Heart right ventricle (tissue), 16 donors: ENCODE measurements at regions of chr10 and their contacts with region 1.

Region 1: GRCh38 chr10:20995123-20995987 is 98.2 kb upstream of the NEBL start:
- DNase-seq: no peak
- ATAC-seq: peak in 4 of 8 donors; percentile 15 to 55 (median 46)
- H3K4me3 ChIP-seq: peak overlapping the region in 8 of 10 donors; percentile 16 to 37 (median 26)
- H3K27ac ChIP-seq: peak overlapping the region in 1 of 10 donors; percentile 16
- H3K4me1 ChIP-seq: peaks cover 0 to 9% (median 0%) of the 10 kb centered on the region in 9 donors
- H3K27me3 ChIP-seq: no peaks in the 10 kb centered on the region
- CTCF ChIP-seq: no peak

Region 2: GRCh38 chr10:20962165-20962564 is 33.2 kb before region 1 on chr10:
- intact Hi-C with region 1: loop called in 1 of 10 experiments (anchors 5 kb)
- DNase-seq: no peak
- ATAC-seq: no peak
- H3K4me3 ChIP-seq: no peak overlapping the region
- H3K27ac ChIP-seq: no peak overlapping the region
- H3K4me1 ChIP-seq: peaks cover 0 to 7% (median 0%) of the 10 kb centered on the region in 9 donors
- H3K27me3 ChIP-seq: no peaks in the 10 kb centered on the region
- CTCF ChIP-seq: no peak

Region 3: GRCh38 chr10:21069929-21070700 is 74.8 kb after region 1 on chr10:
- intact Hi-C with region 1: no loop called
- DNase-seq: no peak
- ATAC-seq: peak in 6 of 8 donors; percentile 53 to 79 (median 66)
- H3K4me3 ChIP-seq: no peak overlapping the region
- H3K27ac ChIP-seq: peak overlapping the region in 8 of 10 donors; percentile 25 to 66 (median 44)
- H3K4me1 ChIP-seq: peaks cover 0 to 41% (median 12%) of the 10 kb centered on the region in 9 donors
- H3K27me3 ChIP-seq: no peaks in the 10 kb centered on the region
- CTCF ChIP-seq: no peak